CD8-positive, alpha-beta T cell (primary cell): ENCODE measurements at regions of chr19 and their contacts with region 1.

Region 1: GRCh38 chr19:3062168-3063102 is at the start of gene TLE5:
- DNase-seq: peak; percentile 46 to 88 (median 72)
- ATAC-seq: peak; percentile 46
- H3K4me3 ChIP-seq: peak within 1 kb of the TSS; percentile 92 to 95
- H3K4me3 Mint-ChIP-seq: peak within 1 kb of the TSS; percentile 92
- H3K27ac ChIP-seq: peak within 1 kb of the TSS; percentile 81 to 83
- H3K27ac Mint-ChIP-seq: peak within 1 kb of the TSS; percentile 87
- H3K4me1 ChIP-seq: peaks cover 51% of the 10 kb centered on the region
- H3K4me1 Mint-ChIP-seq: peaks cover 35% of the 10 kb centered on the region
- H3K27me3 ChIP-seq: no peaks in the 10 kb centered on the region
- H3K27me3 Mint-ChIP-seq: no peaks in the 10 kb centered on the region
- CTCF ChIP-seq: no peak
- total RNA-seq, gene TLE5: 637 to 677 TPM

Region 2: GRCh38 chr19:2977001-2977685 is 85.3 kb before region 1 on chr19 and contains the start of gene TLE6:
- CTCF ChIA-PET with region 1: no interaction called
- POLR2A ChIA-PET with region 1: interaction called, 3 read pairs
- intact Hi-C with region 1: loop called (anchors 1 to 2 kb)
- DNase-seq: peak; percentile 87 to 96 (median 93)
- ATAC-seq: peak; percentile 99
- H3K4me3 ChIP-seq: peak within 1 kb of the TSS; percentile 67 to 84
- H3K4me3 Mint-ChIP-seq: peak within 1 kb of the TSS; percentile 93
- H3K27ac ChIP-seq: no peak within 1 kb of the TSS
- H3K27ac Mint-ChIP-seq: peak within 1 kb of the TSS; percentile 52
- H3K4me1 ChIP-seq: peaks cover 12% of the 10 kb centered on the region
- H3K4me1 Mint-ChIP-seq: peaks cover 16% of the 10 kb centered on the region
- H3K27me3 ChIP-seq: no peaks in the 10 kb centered on the region
- H3K27me3 Mint-ChIP-seq: peaks cover 6% of the 10 kb centered on the region
- CTCF ChIP-seq: no peak
- total RNA-seq, gene TLE6: not detected

Region 3: GRCh38 chr19:3035542-3036118 is 26.8 kb before region 1 on chr19:
- CTCF ChIA-PET with region 1: interaction called, 15 read pairs
- POLR2A ChIA-PET with region 1: interaction called, 104 read pairs
- intact Hi-C with region 1: loop called (anchors 1 kb)
- DNase-seq: peak; percentile 89 to 99 (median 94)
- ATAC-seq: peak; percentile 87
- H3K4me3 ChIP-seq: peak overlapping the region; percentile 63 to 80
- H3K4me3 Mint-ChIP-seq: peak overlapping the region; percentile 93
- H3K27ac ChIP-seq: peak overlapping the region; percentile 47 to 79
- H3K27ac Mint-ChIP-seq: peak overlapping the region; percentile 96
- H3K4me1 ChIP-seq: peaks cover 18% of the 10 kb centered on the region
- H3K4me1 Mint-ChIP-seq: peaks cover 19% of the 10 kb centered on the region
- H3K27me3 ChIP-seq: no peaks in the 10 kb centered on the region
- H3K27me3 Mint-ChIP-seq: no peaks in the 10 kb centered on the region
- CTCF ChIP-seq: no peak

Region 4: DNA sequence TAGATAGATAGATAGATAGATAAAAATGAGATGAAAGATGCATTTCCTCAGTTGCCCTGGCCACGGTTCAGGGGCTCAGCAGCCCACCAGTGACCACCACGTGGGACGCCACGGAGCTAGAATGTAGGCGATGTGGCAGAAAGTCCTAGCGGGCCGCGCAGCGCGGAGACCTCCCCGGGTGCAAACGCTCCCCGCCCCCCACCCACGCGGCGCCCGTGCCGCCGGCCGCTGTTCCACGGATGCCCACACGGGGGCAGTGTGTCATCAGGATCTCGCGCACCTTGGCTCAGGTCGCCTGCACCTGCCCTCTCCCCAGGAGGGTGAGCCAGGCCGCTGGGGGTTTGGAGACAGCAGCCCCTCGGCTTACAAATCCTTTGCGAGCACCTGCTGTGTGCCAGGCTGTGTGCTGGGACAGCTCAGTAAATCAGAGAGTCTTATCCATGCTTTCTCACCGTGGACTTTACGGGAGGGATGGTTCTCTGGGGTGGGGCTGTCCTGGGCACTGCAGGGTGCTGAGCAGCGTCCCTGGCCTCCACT is 13.5 kb after region 1 on chr19:
- CTCF ChIA-PET with region 1: interaction called, 14 read pairs
- POLR2A ChIA-PET with region 1: interaction called, 3 read pairs
- intact Hi-C with region 1: loop called in 1 of 2 experiments (anchors 2 kb)
- DNase-seq: peak; percentile 58 to 89 (median 79)
- ATAC-seq: peak; percentile 100
- H3K4me3 ChIP-seq: no peak overlapping the region
- H3K4me3 Mint-ChIP-seq: no peak overlapping the region
- H3K27ac ChIP-seq: no peak overlapping the region
- H3K27ac Mint-ChIP-seq: no peak overlapping the region
- H3K4me1 ChIP-seq: peaks cover 10% of the 10 kb centered on the region
- H3K4me1 Mint-ChIP-seq: peaks cover 2% of the 10 kb centered on the region
- H3K27me3 ChIP-seq: no peaks in the 10 kb centered on the region
- H3K27me3 Mint-ChIP-seq: no peaks in the 10 kb centered on the region
- CTCF ChIP-seq: peak; percentile 85

Region 5: DNA sequence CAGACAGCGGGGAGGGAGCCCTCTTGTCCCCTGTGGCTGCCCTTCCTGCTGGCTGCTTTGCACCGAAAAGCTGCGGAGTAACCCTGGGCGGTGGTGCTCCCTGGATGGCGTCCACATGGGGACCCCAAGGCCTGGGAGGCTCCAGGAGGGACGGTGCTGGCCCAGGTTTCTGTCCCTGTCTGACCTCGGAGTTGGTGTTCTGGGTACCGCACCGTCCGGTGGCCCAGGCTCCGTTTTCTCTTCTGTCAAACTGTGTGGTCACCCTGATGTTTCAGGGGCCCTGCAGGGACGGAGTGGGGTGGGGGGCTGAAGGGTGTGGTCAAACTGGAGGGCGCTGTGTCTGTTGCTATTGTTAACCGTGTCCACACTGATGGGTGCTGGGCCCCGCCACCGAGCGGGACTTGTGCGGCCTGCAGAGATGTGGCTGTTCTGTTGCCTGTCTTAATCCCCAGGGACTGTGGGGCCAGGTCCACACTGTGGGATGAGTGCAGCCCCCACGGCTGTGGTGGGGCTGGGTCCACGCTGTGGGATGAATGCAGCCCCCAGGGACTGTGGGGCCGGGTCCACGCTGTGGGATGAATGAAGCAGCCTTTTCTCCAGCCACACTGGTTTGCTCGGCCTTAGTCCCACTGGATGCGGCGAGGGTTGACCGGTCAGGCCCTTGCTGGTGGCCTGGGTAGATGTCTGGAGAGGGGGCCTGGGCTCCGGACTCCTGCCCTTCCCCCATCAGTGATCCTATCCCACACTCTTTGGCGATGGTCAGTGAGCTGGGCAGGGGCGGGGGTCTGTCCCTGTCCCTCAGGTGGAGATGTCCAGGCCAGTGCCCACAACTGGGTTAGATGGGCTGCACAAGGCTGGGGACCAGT is 38.7 kb after region 1 on chr19:
- CTCF ChIA-PET with region 1: interaction called, 18 read pairs
- POLR2A ChIA-PET with region 1: interaction called, 3 read pairs
- intact Hi-C with region 1: no loop called
- DNase-seq: peak in 1 of 9 experiments; percentile 3
- ATAC-seq: no peak
- H3K4me3 ChIP-seq: no peak overlapping the region
- H3K4me3 Mint-ChIP-seq: no peak overlapping the region
- H3K27ac ChIP-seq: no peak overlapping the region
- H3K27ac Mint-ChIP-seq: no peak overlapping the region
- H3K4me1 ChIP-seq: peaks cover 35% of the 10 kb centered on the region
- H3K4me1 Mint-ChIP-seq: peaks cover 16% of the 10 kb centered on the region
- H3K27me3 ChIP-seq: peaks cover 0 to 18% of the 10 kb centered on the region in 2 experiments
- H3K27me3 Mint-ChIP-seq: peaks cover 5% of the 10 kb centered on the region
- CTCF ChIP-seq: no peak

Region 6: DNA sequence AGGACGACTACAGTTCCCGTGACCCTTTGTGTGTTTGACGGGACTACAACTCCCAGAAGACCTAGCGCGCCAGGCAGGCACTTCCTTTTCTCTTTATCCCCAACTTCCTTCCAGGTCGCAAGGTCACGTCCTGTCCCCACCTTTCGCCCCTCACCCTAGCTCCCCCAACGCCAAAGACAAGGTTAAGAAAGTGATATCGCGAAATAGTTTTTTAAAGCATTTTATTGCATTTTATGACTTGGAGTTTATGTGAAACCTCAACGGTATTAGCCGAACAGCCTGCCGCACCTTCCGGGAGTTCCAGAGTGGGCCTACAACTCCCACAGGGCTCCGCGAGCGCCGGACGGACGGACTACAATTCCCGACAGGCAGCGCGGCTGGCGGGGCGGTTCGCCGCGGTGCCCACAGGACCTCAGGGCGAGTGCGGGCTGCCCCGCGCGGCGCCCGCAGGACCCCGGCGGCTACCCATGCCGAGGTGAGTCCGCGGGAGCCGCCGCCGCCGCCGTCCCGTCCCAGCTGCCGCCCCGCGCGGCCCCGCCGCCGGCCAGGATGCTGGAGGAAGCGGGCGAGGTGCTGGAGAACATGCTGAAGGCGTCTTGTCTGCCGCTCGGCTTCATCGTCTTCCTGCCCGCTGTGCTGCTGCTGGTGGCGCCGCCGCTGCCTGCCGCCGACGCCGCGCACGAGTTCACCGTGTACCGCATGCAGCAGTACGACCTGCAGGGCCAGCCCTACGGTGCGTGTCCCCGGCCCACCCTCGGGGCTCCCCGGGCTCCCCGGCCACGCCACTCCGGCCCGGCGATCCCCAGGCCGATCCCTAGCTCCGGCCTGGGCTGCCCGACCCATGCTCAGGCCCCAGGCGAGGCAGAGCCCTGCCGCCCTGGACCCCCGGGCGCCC is 123.3 kb after region 1 on chr19 and contains the start of gene NCLN:
- CTCF ChIA-PET with region 1: no interaction called
- POLR2A ChIA-PET with region 1: interaction called, 4 read pairs
- intact Hi-C with region 1: loop called in 1 of 2 experiments (anchors 1 kb)
- DNase-seq: peak; percentile 91 to 98 (median 94)
- ATAC-seq: peak; percentile 84
- H3K4me3 ChIP-seq: peak within 1 kb of the TSS; percentile 66 to 76
- H3K4me3 Mint-ChIP-seq: peak within 1 kb of the TSS; percentile 92
- H3K27ac ChIP-seq: peak within 1 kb of the TSS; percentile 34 to 84
- H3K27ac Mint-ChIP-seq: peak within 1 kb of the TSS; percentile 89
- H3K4me1 ChIP-seq: peaks cover 67% of the 10 kb centered on the region
- H3K4me1 Mint-ChIP-seq: peaks cover 61% of the 10 kb centered on the region
- H3K27me3 ChIP-seq: no peaks in the 10 kb centered on the region
- H3K27me3 Mint-ChIP-seq: no peaks in the 10 kb centered on the region
- CTCF ChIP-seq: no peak
- total RNA-seq, gene NCLN: 47.3 to 55.7 TPM